ENCODE measurements at regions of chr12 and their contacts with region 1.

Region 1: GRCh38 chr12:2057041-2057794 is 4.4 kb downstream of the CACNA1C start:
- DNase-seq: peak; percentile 27 to 45
- H3K4me3 ChIP-seq: no peak overlapping the region
- H3K27ac ChIP-seq: no peak overlapping the region
- H3K4me1 ChIP-seq: peaks cover 0 to 8% of the 10 kb centered on the region in 2 donors
- H3K27me3 ChIP-seq: no peaks in the 10 kb centered on the region
- CTCF ChIP-seq: peak; percentile 14 to 50 (median 31)
- POLR2A ChIP-seq: no peak

Region 2: GRCh38 chr12:1680804-1681492 is 376.3 kb before region 1 on chr12:
- intact Hi-C with region 1: no loop called
- DNase-seq: no peak
- H3K4me3 ChIP-seq: no peak overlapping the region
- H3K27ac ChIP-seq: no peak overlapping the region
- H3K4me1 ChIP-seq: no peaks in the 10 kb centered on the region
- H3K27me3 ChIP-seq: no peaks in the 10 kb centered on the region
- CTCF ChIP-seq: no peak
- POLR2A ChIP-seq: no peak

Region 3: DNA sequence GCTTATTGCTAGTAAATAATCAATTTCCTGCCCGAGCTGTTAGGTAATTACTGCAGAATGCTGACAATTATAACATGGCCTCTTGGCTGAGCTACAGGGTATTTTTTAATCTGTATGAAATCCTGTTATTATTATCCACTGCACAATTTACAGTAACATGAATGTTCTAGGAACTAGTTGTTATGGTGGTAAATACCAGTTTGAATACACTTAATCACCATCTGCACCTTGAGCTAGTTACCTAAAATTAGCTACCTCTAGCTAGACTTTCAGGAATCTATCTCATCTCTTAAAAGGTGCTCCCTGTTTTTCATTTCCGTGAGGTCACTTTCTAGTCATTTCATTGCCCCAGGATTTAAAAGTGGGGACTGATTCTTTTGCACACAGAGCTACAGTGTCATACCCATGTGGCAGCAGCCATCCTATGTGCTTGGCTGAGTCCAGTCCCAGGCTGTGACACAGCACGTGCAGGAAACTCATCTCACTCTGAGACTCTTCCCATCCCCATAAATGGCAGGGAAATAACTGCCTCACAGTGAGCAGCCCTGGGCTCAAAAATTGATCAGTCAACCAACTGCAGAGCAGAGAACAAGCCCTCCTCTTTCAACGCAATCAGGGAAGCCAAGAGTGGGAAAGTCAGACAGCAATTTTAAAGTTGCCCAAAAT is 90.5 kb before region 1 on chr12:
- intact Hi-C with region 1: no loop called
- DNase-seq: no peak
- H3K4me3 ChIP-seq: no peak overlapping the region
- H3K27ac ChIP-seq: no peak overlapping the region
- H3K4me1 ChIP-seq: no peaks in the 10 kb centered on the region
- H3K27me3 ChIP-seq: no peaks in the 10 kb centered on the region
- CTCF ChIP-seq: no peak
- POLR2A ChIP-seq: no peak

Region 4: DNA sequence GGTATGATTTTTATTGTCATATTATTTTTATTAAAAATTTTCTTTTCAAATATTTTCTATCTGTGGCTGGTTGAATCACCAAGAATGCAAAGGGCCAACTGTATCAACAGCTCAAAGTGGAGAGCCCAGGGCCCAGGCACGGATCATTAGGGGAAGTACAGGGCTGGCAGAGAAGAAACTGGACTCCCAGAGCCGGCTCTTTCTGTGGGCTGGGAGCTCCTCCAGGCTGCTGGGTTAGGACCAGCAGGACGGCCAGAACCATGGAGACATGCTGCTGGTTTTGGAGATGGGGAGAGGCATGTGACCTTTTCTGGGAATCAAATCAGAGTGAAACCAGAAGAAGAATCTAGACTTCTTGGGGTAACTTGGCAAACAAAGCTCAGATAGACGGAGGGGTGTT is 216.1 kb after region 1 on chr12:
- intact Hi-C with region 1: loop called (anchors 10 kb)
- DNase-seq: peak in 1 of 2 donors; percentile 13
- H3K4me3 ChIP-seq: no peak overlapping the region
- H3K27ac ChIP-seq: no peak overlapping the region
- H3K4me1 ChIP-seq: no peaks in the 10 kb centered on the region
- H3K27me3 ChIP-seq: no peaks in the 10 kb centered on the region
- CTCF ChIP-seq: peak in 1 of 6 experiments; percentile 4
- POLR2A ChIP-seq: no peak

Region 5: DNA sequence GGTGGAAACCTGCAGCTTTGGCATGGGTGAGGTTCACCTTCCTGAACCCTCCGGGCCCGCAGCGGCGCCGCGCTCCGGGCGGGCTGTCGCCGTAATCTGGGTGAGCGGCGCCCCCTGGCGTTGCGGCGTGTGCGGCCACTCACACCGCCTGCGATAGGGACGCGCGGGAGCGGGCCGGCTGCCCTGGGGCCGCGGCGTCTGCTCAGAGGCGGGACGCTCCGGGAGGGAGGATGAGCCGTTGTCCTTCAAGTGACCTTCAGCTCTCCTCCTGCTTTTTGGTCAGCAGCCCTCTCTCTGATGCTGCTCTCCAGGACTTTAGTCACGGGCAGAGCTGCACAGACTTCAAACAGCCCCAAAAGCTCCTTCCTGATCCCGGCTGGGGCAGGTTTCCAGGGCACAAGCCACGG is 525.9 kb after region 1 on chr12:
- intact Hi-C with region 1: loop called (anchors 10 kb)
- DNase-seq: peak; percentile 66 to 69
- H3K4me3 ChIP-seq: no peak overlapping the region
- H3K27ac ChIP-seq: no peak overlapping the region
- H3K4me1 ChIP-seq: peaks cover 15 to 24% of the 10 kb centered on the region in 2 donors
- H3K27me3 ChIP-seq: no peaks in the 10 kb centered on the region
- CTCF ChIP-seq: peak; percentile 50 to 97 (median 94)
- POLR2A ChIP-seq: no peak